Activated CD4-positive, alpha-beta T cell treated with anti-CD3 and anti-CD28 coated beads for 36 hours (primary cell): ENCODE measurements at regions of chr9 and their contacts with region 1.

Region 1: DNA sequence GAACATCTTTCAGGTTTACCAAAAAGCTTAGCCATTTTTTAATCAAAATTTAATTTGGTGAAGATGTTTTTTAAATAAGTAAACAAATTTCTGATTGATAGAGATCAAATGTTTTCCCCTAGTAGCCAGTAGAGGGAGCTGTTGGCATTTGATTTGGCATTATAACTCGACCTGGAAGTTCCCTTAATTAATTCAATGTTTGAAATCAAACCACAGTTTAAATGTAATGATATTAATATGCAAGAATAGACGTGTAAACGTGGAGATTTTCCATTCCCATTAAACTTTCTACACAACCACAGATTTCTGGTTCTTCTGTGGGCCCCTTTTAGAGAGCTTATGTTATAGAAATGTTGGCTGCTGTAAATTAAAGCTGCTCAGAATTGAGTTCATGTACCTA is 148.1 kb upstream of the MPDZ start:
- DNase-seq: no peak
- ATAC-seq: no peak
- H3K4me3 Mint-ChIP-seq: no peak overlapping the region
- H3K27ac Mint-ChIP-seq: no peak overlapping the region
- H3K4me1 Mint-ChIP-seq: no peaks in the 10 kb centered on the region
- H3K27me3 Mint-ChIP-seq: no peaks in the 10 kb centered on the region

Region 2: GRCh38 chr9:11500780-11501179 is 1926.8 kb before region 1 on chr9:
- CTCF ChIA-PET with region 1: no interaction called
- POLR2A ChIA-PET with region 1: no interaction called
- intact Hi-C with region 1: no loop called
- DNase-seq: no peak
- ATAC-seq: no peak
- H3K4me3 Mint-ChIP-seq: no peak overlapping the region
- H3K27ac Mint-ChIP-seq: no peak overlapping the region
- H3K4me1 Mint-ChIP-seq: no peaks in the 10 kb centered on the region
- H3K27me3 Mint-ChIP-seq: no peaks in the 10 kb centered on the region

Region 3: DNA sequence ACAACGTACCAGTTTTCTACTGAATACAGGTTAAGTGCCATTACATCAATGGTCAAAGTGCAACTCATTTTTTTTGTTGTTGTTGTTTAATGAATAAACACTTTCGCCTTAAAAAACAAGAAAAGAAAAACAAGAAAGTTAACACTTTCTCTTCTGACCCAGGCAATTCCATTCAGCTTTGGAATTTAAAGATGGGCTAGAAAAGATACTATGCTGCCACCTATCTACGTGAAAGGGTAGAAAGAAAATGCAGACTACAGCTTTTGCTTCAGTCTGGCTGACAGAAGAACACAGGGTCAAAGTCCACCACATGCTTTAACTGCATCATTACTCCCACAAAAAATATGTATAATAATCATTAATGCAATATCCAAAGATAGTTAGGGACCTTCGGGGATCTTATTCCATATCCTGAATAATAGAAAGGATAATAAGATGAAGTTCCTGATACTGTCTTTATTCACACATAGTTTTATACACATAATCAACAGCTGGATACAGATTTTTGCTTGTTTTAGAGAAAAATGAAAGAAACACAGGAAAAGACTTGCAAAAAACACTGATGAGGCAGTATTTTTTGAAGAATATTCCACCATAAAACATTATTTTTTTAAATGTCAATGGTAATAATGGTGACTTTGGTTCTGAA is 1225.3 kb after region 1 on chr9:
- CTCF ChIA-PET with region 1: no interaction called
- POLR2A ChIA-PET with region 1: no interaction called
- intact Hi-C with region 1: loop called in 1 of 2 experiments (anchors 10 kb)
- DNase-seq: no peak
- ATAC-seq: no peak
- H3K4me3 Mint-ChIP-seq: no peak overlapping the region
- H3K27ac Mint-ChIP-seq: no peak overlapping the region
- H3K4me1 Mint-ChIP-seq: no peaks in the 10 kb centered on the region
- H3K27me3 Mint-ChIP-seq: no peaks in the 10 kb centered on the region